ENCODE measurements at regions of chr6 and their contacts with region 1.

Region 1: GRCh38 chr6:27132532-27133280 is 114.8 kb upstream of the PRSS16 start:
- DNase-seq: peak; percentile 91 to 93
- ATAC-seq: peak; percentile 95
- H3K4me3 ChIP-seq: peak overlapping the region; percentile 21 to 52
- H3K27ac ChIP-seq: peak overlapping the region; percentile 17 to 65
- H3K4me1 ChIP-seq: no peaks in the 10 kb centered on the region
- H3K27me3 ChIP-seq: peaks cover 0 to 3% of the 10 kb centered on the region in 2 donors

Region 2: DNA sequence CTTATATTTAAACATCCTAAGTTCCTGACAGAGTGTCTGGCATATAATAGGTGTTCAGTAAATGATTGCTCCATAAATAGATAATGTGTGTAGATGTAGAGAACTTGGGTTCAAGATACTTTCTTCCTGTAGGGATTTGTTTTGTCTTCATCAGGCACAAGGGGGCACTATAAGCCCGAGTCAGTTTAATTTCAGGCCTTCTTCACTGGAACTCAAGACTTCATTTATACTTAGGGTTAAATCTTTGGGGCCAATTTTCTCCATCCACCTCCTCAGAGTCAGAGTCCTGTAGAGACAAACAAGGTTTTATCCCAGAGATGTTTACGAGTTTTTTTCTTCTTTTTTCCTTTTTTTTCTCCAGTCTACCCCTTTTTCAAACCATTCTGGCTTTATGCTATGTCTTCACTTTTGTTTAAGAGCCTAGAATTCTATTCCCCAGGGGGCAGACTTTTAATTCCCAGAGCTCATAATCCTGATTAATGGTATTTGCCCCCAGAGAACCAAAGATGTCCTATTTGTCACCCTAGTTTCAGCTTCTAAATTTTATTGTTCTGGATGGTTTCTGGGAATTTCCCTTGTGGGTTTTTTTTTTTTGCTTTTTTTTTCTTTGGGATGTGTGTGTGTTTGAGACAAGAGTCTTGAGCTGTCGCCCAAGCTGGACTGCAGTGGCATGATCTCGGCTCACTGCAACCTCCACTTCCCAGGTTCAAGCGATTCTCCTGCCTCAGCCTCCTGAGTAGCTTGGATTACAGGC is 957.1 kb before region 1 on chr6:
- intact Hi-C with region 1: loop called in 1 of 2 experiments (anchors 5 kb)
- DNase-seq: no peak
- ATAC-seq: no peak
- H3K4me3 ChIP-seq: no peak overlapping the region
- H3K27ac ChIP-seq: no peak overlapping the region
- H3K4me1 ChIP-seq: peaks cover 0 to 1% of the 10 kb centered on the region in 2 donors
- H3K27me3 ChIP-seq: no peaks in the 10 kb centered on the region

Region 3: GRCh38 chr6:26285143-26286134 is 847.3 kb before region 1 on chr6:
- intact Hi-C with region 1: loop called in 1 of 2 experiments (anchors 10 kb)
- DNase-seq: peak; percentile 97 to 98
- ATAC-seq: peak; percentile 97
- H3K4me3 ChIP-seq: peak overlapping the region; percentile 88 to 92
- H3K27ac ChIP-seq: peak overlapping the region; percentile 88 to 99
- H3K4me1 ChIP-seq: peaks cover 0 to 3% of the 10 kb centered on the region in 2 donors
- H3K27me3 ChIP-seq: no peaks in the 10 kb centered on the region

Region 4: GRCh38 chr6:26520853-26521599 is 611.7 kb before region 1 on chr6:
- intact Hi-C with region 1: loop called in 1 of 2 experiments (anchors 10 kb)
- DNase-seq: peak; percentile 93 to 94
- ATAC-seq: peak; percentile 96
- H3K4me3 ChIP-seq: peak overlapping the region; percentile 52 to 90
- H3K27ac ChIP-seq: peak overlapping the region; percentile 80 to 95
- H3K4me1 ChIP-seq: peaks cover 0 to 1% of the 10 kb centered on the region in 2 donors
- H3K27me3 ChIP-seq: no peaks in the 10 kb centered on the region

Region 5: DNA sequence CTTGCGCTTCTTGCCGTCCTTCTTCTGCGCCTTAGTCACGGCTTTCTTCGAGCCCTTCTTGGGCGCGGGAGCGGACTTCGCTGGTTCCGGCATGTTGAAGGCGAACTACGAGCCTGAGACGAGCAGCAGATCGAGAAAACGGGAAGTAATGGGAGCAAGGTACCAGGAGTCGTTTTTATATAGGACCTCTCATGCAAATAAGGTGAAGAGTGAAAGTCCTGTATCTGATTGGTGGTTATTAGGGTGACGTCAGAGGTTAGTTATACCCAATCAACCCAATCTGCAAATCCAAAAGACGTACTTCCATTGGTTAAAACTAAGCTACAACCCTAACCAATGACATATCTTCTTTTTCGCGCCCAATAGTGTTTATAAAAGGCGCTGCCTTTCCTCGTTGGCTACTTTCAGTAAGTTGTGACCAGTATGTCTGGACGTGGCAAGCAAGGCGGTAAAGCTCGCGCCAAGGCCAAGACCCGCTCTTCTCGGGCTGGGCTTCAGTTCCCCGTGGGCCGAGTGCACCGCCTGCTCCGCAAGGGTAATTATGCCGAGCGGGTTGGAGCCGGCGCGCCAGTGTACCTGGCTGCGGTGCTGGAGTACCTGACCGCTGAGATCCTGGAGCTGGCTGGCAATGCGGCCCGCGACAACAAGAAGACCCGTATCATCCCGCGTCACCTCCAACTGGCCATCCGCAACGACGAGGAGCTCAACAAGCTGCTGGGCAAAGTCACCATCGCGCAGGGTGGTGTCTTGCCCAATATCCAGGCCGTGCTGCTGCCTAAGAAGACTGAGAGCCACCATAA is 14.2 kb after region 1 on chr6:
- intact Hi-C with region 1: loop called in 1 of 2 experiments (anchors 2 kb)
- DNase-seq: peak; percentile 87 to 90
- ATAC-seq: peak; percentile 96
- H3K4me3 ChIP-seq: peak overlapping the region; percentile 44 to 85
- H3K27ac ChIP-seq: peak overlapping the region in 1 of 2 donors; percentile 82
- H3K4me1 ChIP-seq: no peaks in the 10 kb centered on the region
- H3K27me3 ChIP-seq: no peaks in the 10 kb centered on the region

Region 6: GRCh38 chr6:27472617-27473400 is 340.1 kb after region 1 on chr6 and contains the start of gene ZNF184:
- intact Hi-C with region 1: loop called in 1 of 2 experiments (anchors 10 kb)
- DNase-seq: peak; percentile 97 to 98
- ATAC-seq: peak; percentile 99
- H3K4me3 ChIP-seq: peak within 1 kb of the TSS; percentile 49 to 66
- H3K27ac ChIP-seq: peak within 1 kb of the TSS in 1 of 2 donors; percentile 7
- H3K4me1 ChIP-seq: no peaks in the 10 kb centered on the region
- H3K27me3 ChIP-seq: no peaks in the 10 kb centered on the region
- total RNA-seq, gene ZNF184: 5.3 to 8.0 TPM

Region 7: GRCh38 chr6:28311139-28311823 is 1178.6 kb after region 1 on chr6:
- intact Hi-C with region 1: no loop called
- DNase-seq: no peak
- ATAC-seq: no peak
- H3K4me3 ChIP-seq: no peak overlapping the region
- H3K27ac ChIP-seq: no peak overlapping the region
- H3K4me1 ChIP-seq: no peaks in the 10 kb centered on the region
- H3K27me3 ChIP-seq: no peaks in the 10 kb centered on the region

Region 8: DNA sequence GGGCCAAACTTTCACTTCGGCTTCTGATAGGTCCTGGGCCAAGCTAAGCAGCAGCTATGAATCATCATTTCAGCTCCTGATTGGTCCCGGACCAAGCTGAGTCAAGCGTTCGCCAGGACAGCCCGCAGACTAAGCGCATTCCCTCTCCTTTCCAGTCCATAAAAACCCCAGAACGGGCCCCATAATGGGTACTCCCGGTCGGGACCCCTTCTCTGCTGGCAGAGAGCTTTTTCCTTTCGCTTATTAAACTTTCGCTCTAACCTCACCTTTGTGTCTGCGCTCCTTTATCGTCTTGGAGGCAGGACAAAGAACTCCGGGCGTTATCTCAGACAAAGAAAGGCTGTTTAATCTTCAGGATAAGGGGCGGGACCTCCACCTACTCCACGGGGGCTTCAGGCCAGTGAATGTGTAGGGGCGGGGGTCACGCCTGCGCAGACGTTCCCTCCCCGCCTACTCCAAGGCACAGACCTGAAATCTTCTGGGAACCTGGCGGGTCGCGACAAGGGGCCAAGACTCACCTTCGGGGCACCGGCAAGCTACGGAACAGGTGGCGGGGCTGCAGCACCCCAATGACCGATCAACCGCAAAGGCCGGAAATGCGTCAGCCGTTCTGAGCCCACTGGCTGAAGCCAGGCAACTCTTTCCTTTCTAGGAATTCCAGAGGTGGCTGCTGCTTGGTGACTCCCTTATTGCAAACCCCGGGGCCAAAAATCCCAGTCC is 1203.0 kb after region 1 on chr6 and contains the start of gene ZSCAN31:
- intact Hi-C with region 1: loop called in 1 of 2 experiments (anchors 5 kb)
- DNase-seq: peak; percentile 96 to 98
- ATAC-seq: peak; percentile 98
- H3K4me3 ChIP-seq: peak within 1 kb of the TSS; percentile 82 to 84
- H3K27ac ChIP-seq: peak within 1 kb of the TSS; percentile 92 to 95
- H3K4me1 ChIP-seq: no peaks in the 10 kb centered on the region
- H3K27me3 ChIP-seq: no peaks in the 10 kb centered on the region
- total RNA-seq, gene ZSCAN31: 8.3 to 10.9 TPM